ENCODE measurements at regions of chr6 and their contacts with region 1.

Region 1: GRCh38 chr6:13574149-13574570 is 241 bp upstream of the SIRT5 start:
- DNase-seq: peak; percentile 91 to 96
- H3K4me3 ChIP-seq: peak overlapping the region; percentile 69 to 80 (median 75)
- H3K27ac ChIP-seq: peak overlapping the region; percentile 87
- H3K4me1 ChIP-seq: peaks cover 0 to 6% (median 5%) of the 10 kb centered on the region in 4 experiments; a peak in 6 of 7 replicates
- H3K27me3 ChIP-seq: no peaks in the 10 kb centered on the region
- CTCF ChIP-seq: peak; percentile 46 to 70 (median 63)
- EP300 ChIP-seq: no peak
- POLR2A ChIP-seq: peak; percentile 39 to 76; a peak in 2 of 3 replicates
- RAD21 ChIP-seq: peak; percentile 38 to 59

Region 2: DNA sequence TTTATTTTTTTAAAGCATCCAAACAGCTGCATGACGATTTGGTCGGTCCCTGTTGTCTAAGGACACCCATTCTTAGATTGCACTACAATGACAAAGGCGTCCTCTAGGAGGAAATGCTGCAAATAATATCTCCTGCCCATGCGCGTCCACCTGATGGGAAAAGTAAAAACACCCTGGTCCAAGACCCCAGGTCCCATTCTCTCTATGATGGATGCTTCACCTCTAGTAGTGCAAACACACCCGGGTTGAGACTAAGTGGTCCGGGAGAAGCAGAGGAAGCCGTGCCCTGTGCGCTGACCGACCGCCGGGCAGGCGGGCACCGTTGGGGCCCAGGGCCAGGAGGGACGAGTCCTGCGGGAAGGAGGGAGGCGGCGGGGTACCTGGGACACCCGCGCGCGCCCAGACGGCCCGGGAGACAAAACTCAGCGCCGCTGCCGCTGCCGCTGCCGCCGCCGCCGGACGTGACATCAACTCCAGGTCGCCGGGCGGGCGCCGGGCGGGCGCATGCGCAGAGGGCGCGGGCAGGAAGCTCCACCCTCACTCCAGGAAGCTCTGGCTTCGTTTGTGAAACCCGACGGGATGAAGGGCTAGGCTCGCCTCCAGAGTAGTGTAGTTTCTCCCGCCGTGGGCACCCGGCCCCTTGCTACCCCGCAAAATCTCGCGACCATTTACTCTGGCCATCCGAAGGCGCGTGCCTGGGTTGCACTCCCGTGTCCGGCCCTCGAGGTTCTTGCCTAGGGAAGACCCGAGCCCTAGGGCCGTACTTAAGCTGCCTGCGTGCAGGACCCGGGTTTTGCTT is 245.9 kb before region 1 on chr6 and contains the start of gene TBC1D7:
- CTCF ChIA-PET with region 1: interaction called, 9 read pairs
- POLR2A ChIA-PET with region 1: interaction called, 10 read pairs
- DNase-seq: peak; percentile 79 to 97
- H3K4me3 ChIP-seq: peak within 1 kb of the TSS; percentile 73 to 92 (median 90)
- H3K27ac ChIP-seq: peak within 1 kb of the TSS; percentile 82
- H3K4me1 ChIP-seq: no peaks in the 10 kb centered on the region; a peak in 1 of 7 replicates
- H3K27me3 ChIP-seq: no peaks in the 10 kb centered on the region
- CTCF ChIP-seq: no peak
- EP300 ChIP-seq: no peak
- POLR2A ChIP-seq: peak; percentile 65 to 93
- RAD21 ChIP-seq: no peak
- total RNA-seq, gene TBC1D7: 55.2 and 59.9 TPM in 2 replicates

Region 3: GRCh38 chr6:13383328-13384163 is 190.6 kb before region 1 on chr6:
- CTCF ChIA-PET with region 1: interaction called, 10 read pairs
- POLR2A ChIA-PET with region 1: interaction called, 4 read pairs
- DNase-seq: no peak
- H3K4me3 ChIP-seq: no peak overlapping the region
- H3K27ac ChIP-seq: no peak overlapping the region
- H3K4me1 ChIP-seq: peaks cover 2 to 5% (median 3%) of the 10 kb centered on the region in 4 experiments; a peak in 4 of 7 replicates
- H3K27me3 ChIP-seq: no peaks in the 10 kb centered on the region
- CTCF ChIP-seq: no peak
- EP300 ChIP-seq: no peak
- POLR2A ChIP-seq: no peak
- RAD21 ChIP-seq: no peak

Region 4: DNA sequence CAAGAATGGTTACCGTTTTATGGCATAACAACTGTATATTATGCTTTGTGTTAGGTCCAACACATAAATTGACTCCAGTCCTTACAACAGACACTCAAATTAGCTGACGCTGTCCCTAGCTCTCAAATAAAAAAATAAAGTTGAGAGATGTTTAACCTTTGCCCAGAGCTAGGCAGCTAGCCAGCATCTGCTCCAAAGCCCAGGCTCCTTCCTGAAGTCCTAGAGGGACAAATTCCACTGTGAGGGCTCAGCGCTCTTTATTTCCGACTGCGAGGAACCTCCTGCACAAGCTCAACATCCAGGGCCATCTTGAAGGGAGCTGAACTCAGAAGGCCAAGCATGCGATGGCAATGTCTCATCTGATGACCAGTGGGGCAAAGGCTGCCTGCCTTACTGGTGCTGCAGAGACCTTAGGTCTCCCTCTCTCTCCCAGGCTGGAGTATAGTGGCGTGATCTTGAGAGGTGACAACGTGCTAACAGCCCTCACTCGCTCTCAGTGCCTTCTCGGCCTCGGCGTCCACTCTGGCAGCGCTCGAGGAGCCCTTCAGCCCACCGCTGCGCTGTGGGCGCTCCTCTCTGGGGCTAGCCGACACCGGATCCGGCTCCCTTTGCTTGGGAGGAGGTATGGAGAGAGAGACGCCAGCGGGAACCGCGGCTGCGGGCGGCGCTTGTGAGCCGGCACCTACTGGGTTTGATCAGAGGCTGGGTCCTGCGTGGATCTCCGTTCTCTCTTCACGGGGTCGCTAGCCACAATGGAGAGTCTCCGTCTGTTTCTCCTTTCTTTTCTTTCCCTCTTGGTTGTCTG is 62.0 kb before region 1 on chr6:
- CTCF ChIA-PET with region 1: interaction called, 10 read pairs
- POLR2A ChIA-PET with region 1: interaction called, 4 read pairs
- DNase-seq: peak in 1 of 2 experiments; percentile 44
- H3K4me3 ChIP-seq: no peak overlapping the region
- H3K27ac ChIP-seq: no peak overlapping the region
- H3K4me1 ChIP-seq: no peaks in the 10 kb centered on the region
- H3K27me3 ChIP-seq: no peaks in the 10 kb centered on the region
- CTCF ChIP-seq: no peak
- EP300 ChIP-seq: no peak
- POLR2A ChIP-seq: no peak
- RAD21 ChIP-seq: no peak; a peak in 1 of 4 replicates

Region 5: GRCh38 chr6:13522656-13523055 is 51.5 kb before region 1 on chr6:
- CTCF ChIA-PET with region 1: no interaction called
- POLR2A ChIA-PET with region 1: no interaction called
- DNase-seq: no peak
- H3K4me3 ChIP-seq: no peak overlapping the region
- H3K27ac ChIP-seq: no peak overlapping the region
- H3K4me1 ChIP-seq: no peaks in the 10 kb centered on the region
- H3K27me3 ChIP-seq: no peaks in the 10 kb centered on the region
- CTCF ChIP-seq: no peak
- EP300 ChIP-seq: no peak
- POLR2A ChIP-seq: no peak
- RAD21 ChIP-seq: no peak

Region 6: DNA sequence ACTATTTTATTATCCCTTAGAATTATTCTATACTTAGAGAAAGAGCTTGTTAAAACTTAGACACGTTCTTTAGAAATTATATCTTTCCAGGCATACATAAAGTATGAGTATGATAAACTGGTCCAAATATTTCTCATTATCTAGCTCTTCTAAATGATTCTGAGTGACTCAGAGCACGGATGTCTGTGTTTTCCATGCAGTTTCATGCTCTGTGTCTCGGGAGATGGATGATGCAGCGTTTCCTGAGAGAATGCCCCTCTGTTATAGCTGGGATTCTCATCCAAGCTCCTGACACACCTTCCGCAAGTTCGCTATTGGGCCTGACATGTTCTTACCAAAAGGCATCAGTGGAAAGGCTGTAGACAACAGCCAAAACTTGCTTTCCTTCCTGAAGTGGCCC is 19.6 kb after region 1 on chr6:
- CTCF ChIA-PET with region 1: interaction called, 20 read pairs
- POLR2A ChIA-PET with region 1: interaction called, 13 read pairs
- DNase-seq: no peak
- H3K4me3 ChIP-seq: no peak overlapping the region
- H3K27ac ChIP-seq: no peak overlapping the region
- H3K4me1 ChIP-seq: no peaks in the 10 kb centered on the region; a peak in 2 of 7 replicates
- H3K27me3 ChIP-seq: no peaks in the 10 kb centered on the region
- CTCF ChIP-seq: no peak
- EP300 ChIP-seq: no peak
- POLR2A ChIP-seq: no peak
- RAD21 ChIP-seq: no peak

Measured in H1 (cell line).